ENCODE measurements at regions of chr17 and their contacts with region 1.

Region 1: GRCh38 chr17:48892940-48893645 is 506 bp downstream of the ATP5MC1 start:
- DNase-seq: peak in 2 of 9 donors; percentile 11 to 14
- ATAC-seq: no peak
- H3K4me3 ChIP-seq: peak overlapping the region; percentile 60
- H3K4me3 Mint-ChIP-seq: peak overlapping the region; percentile 87 to 98 (median 94)
- H3K27ac ChIP-seq: peak overlapping the region; percentile 82
- H3K27ac Mint-ChIP-seq: peak overlapping the region; percentile 91 to 100 (median 93)
- H3K4me1 ChIP-seq: peaks cover 5 to 16% of the 10 kb centered on the region in 2 donors
- H3K4me1 Mint-ChIP-seq: peaks cover 17 to 42% (median 29%) of the 10 kb centered on the region in 7 donors
- H3K27me3 ChIP-seq: no peaks in the 10 kb centered on the region
- H3K27me3 Mint-ChIP-seq: peaks cover 0 to 3% (median 0%) of the 10 kb centered on the region in 5 donors

Region 2: DNA sequence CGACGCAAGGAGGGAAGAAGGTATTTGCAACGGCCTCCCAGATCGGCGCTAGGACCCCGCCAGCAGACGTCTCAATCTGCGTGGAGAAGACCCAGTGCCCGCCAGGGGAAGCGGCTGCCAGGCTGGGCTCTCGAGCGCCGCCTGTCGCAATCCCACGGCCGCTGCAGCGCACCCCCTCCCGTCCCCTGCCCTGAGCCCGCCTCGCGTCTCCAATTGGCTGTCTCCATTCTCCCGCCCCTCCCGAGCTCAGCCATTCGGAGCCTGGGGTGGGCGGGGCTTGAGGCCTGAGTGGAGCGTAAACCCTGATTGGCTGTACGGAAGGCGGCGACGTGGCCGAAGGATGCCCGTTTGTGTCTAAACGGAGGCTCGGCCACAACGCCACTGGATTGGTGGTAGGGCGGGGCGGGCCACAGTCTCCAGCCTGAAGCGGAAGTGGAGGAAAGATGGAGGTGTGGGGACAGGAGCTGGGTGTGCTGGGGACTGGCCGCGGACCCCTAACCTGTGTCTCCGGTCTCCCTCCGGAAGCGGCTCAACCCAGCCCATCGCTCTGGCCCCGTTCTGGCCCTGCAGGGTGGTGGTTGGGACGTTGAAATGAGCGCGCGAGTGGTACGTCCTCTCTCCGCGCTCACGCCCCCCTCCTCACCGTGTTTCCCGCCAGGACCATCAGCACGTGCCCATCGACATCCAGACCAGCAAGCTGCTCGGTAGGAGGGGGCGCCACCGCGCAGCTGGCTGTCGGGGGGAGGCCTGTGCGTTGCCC is 922.2 kb before region 1 on chr17 and contains the start of gene CDK5RAP3:
- CTCF ChIA-PET with region 1: no interaction called
- POLR2A ChIA-PET with region 1: no interaction called
- intact Hi-C with region 1: loop called in 1 of 2 experiments (anchors 1 kb)
- DNase-seq: peak; percentile 93 to 99 (median 97)
- ATAC-seq: peak; percentile 100
- H3K4me3 ChIP-seq: peak within 1 kb of the TSS; percentile 96
- H3K4me3 Mint-ChIP-seq: peak within 1 kb of the TSS; percentile 95 to 100 (median 99)
- H3K27ac ChIP-seq: peak within 1 kb of the TSS; percentile 71
- H3K27ac Mint-ChIP-seq: peak within 1 kb of the TSS; percentile 83 to 96 (median 93)
- H3K4me1 ChIP-seq: peaks cover 6 to 12% of the 10 kb centered on the region in 2 donors
- H3K4me1 Mint-ChIP-seq: peaks cover 14 to 41% (median 26%) of the 10 kb centered on the region in 7 donors
- H3K27me3 ChIP-seq: no peaks in the 10 kb centered on the region
- H3K27me3 Mint-ChIP-seq: no peaks in the 10 kb centered on the region
- total RNA-seq, gene CDK5RAP3: 238 to 349 (median 276) TPM

Region 3: GRCh38 chr17:48830840-48831548 is 62.1 kb before region 1 on chr17 and contains the start of gene CALCOCO2:
- CTCF ChIA-PET with region 1: interaction called, 3 read pairs
- POLR2A ChIA-PET with region 1: interaction called, 5 read pairs
- intact Hi-C with region 1: loop called (anchors 1 kb)
- DNase-seq: peak; percentile 69 to 88 (median 77)
- ATAC-seq: peak; percentile 96
- H3K4me3 ChIP-seq: peak within 1 kb of the TSS; percentile 97
- H3K4me3 Mint-ChIP-seq: peak within 1 kb of the TSS; percentile 93 to 99 (median 97)
- H3K27ac ChIP-seq: peak within 1 kb of the TSS; percentile 92
- H3K27ac Mint-ChIP-seq: peak within 1 kb of the TSS; percentile 83 to 99 (median 99)
- H3K4me1 ChIP-seq: peaks cover 15 to 29% of the 10 kb centered on the region in 2 donors
- H3K4me1 Mint-ChIP-seq: peaks cover 32 to 63% (median 53%) of the 10 kb centered on the region in 7 donors
- H3K27me3 ChIP-seq: no peaks in the 10 kb centered on the region
- H3K27me3 Mint-ChIP-seq: peaks cover 0 to 2% (median 0%) of the 10 kb centered on the region in 5 donors
- total RNA-seq, gene CALCOCO2: 129 to 208 (median 139) TPM

Region 4: GRCh38 chr17:48944519-48945260 is 51.6 kb after region 1 on chr17 and contains the start of gene SNF8:
- CTCF ChIA-PET with region 1: no interaction called
- POLR2A ChIA-PET with region 1: interaction called, 9 read pairs
- intact Hi-C with region 1: loop called (anchors 1 kb)
- DNase-seq: peak; percentile 84 to 96 (median 91)
- ATAC-seq: peak; percentile 97
- H3K4me3 ChIP-seq: peak within 1 kb of the TSS; percentile 100
- H3K4me3 Mint-ChIP-seq: peak within 1 kb of the TSS; percentile 92 to 100 (median 98)
- H3K27ac ChIP-seq: peak within 1 kb of the TSS; percentile 92
- H3K27ac Mint-ChIP-seq: peak within 1 kb of the TSS; percentile 89 to 99 (median 97)
- H3K4me1 ChIP-seq: peaks cover 11 to 14% of the 10 kb centered on the region in 2 donors
- H3K4me1 Mint-ChIP-seq: peaks cover 4 to 32% (median 12%) of the 10 kb centered on the region in 7 donors
- H3K27me3 ChIP-seq: no peaks in the 10 kb centered on the region
- H3K27me3 Mint-ChIP-seq: peaks cover 0 to 9% (median 0%) of the 10 kb centered on the region in 5 donors
- total RNA-seq, gene SNF8: 54.8 to 122 (median 60.3) TPM

Region 5: DNA sequence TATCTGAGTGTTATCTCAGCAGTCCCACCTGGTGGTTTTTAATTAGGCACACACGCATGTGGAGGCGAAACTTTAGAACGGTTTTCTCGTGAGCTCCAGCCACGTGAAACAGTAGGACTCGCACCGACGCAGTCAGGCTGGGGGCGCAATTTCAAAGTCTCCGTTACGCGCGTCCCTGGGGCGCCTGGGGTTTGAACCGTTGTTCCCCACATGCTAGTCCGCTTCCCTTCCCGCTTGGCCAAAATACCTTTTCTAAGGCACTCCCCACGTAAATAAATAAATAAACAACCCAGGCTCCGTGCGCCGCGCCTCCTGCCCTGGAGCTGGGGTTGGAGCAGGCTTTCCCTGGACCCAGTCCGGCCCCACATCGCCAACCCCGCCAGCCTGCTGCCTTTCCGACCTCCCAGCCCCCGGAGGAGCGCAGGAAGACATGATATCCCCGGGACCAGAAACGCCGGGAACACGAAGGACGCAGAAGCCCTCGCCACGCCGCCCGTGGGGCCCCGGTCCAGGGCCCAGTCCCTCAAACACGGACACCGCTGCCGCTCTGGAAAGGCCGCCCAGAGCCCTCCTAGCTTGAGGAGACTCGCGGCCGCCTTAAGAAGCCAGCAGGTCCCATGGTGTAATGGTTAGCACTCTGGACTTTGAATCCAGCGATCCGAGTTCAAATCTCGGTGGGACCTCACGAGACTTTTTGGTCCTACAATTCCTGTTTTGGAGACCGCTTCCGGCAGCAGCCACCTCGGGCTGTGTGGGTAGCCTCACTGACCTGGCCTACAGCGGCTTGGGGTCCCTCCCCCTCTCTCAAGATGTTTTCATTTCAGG is 299.0 kb after region 1 on chr17:
- CTCF ChIA-PET with region 1: no interaction called
- POLR2A ChIA-PET with region 1: no interaction called
- intact Hi-C with region 1: loop called (anchors 1 to 2 kb)
- DNase-seq: peak in 8 of 9 donors; percentile 75 to 96 (median 94)
- ATAC-seq: peak; percentile 71
- H3K4me3 ChIP-seq: peak overlapping the region; percentile 88
- H3K4me3 Mint-ChIP-seq: peak overlapping the region; percentile 84 to 98 (median 95)
- H3K27ac ChIP-seq: peak overlapping the region; percentile 87
- H3K27ac Mint-ChIP-seq: peak overlapping the region; percentile 96 to 99 (median 98)
- H3K4me1 ChIP-seq: peaks cover 6% of the 10 kb centered on the region in 2 donors
- H3K4me1 Mint-ChIP-seq: peaks cover 16 to 57% (median 27%) of the 10 kb centered on the region in 7 donors
- H3K27me3 ChIP-seq: no peaks in the 10 kb centered on the region
- H3K27me3 Mint-ChIP-seq: peaks cover 0 to 6% (median 0%) of the 10 kb centered on the region in 5 donors

Region 6: GRCh38 chr17:49788478-49789242 is 895.6 kb after region 1 on chr17 and contains the start of gene KAT7:
- CTCF ChIA-PET with region 1: no interaction called
- POLR2A ChIA-PET with region 1: no interaction called
- intact Hi-C with region 1: loop called in 1 of 2 experiments (anchors 10 kb)
- DNase-seq: peak; percentile 90 to 99 (median 99)
- ATAC-seq: peak; percentile 90
- H3K4me3 ChIP-seq: peak within 1 kb of the TSS; percentile 98
- H3K4me3 Mint-ChIP-seq: peak within 1 kb of the TSS; percentile 92 to 99 (median 96)
- H3K27ac ChIP-seq: peak within 1 kb of the TSS; percentile 98
- H3K27ac Mint-ChIP-seq: peak within 1 kb of the TSS; percentile 91 to 99 (median 98)
- H3K4me1 ChIP-seq: peaks cover 17 to 30% of the 10 kb centered on the region in 2 donors
- H3K4me1 Mint-ChIP-seq: peaks cover 39 to 62% (median 58%) of the 10 kb centered on the region in 7 donors
- H3K27me3 ChIP-seq: no peaks in the 10 kb centered on the region
- H3K27me3 Mint-ChIP-seq: peaks cover 0 to 8% (median 0%) of the 10 kb centered on the region in 5 donors
- total RNA-seq, gene KAT7: 85.6 to 195 (median 132) TPM

Measured in naive thymus-derived CD4-positive, alpha-beta T cell (primary cell).